Caco-2 (cell line): ENCODE measurements at regions of chr3 and their contacts with region 1.

Region 1: DNA sequence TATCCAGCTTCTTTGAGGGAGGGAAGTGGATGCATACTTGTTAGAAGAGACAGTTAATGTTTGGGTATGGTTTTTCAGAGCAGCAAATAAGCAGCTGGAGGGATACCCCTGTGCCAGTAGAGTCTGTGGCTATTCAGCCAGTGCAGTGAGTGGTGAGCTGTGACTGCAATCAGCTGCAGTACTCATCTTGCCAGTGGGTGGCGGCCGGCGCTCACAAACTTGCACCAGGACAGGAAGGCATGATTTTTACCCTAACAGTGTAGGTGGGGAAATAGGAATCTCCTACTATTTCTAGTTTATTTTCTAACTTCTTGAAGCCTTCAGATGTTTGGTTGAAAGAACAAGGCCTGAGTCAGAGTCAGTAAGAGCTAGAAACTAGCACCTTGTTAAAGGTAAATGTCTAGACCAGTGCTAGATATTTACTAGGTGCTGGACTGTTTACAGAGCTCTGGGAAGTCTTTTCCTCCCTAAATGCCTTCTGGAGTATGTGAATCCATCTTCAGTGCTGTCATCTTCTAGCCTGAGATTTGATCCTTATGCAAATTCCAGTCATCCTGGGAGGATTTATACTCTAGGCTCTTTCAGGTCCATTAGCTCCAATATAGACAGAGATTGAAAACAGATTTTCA is 23.6 kb downstream of the TIMP4 start:
- DNase-seq: peak; percentile 68 to 71
- H3K4me3 ChIP-seq: no peak overlapping the region
- H3K4me3 Mint-ChIP-seq: no peak overlapping the region
- H3K27ac Mint-ChIP-seq: no peak overlapping the region
- H3K4me1 ChIP-seq: no peaks in the 10 kb centered on the region
- H3K4me1 Mint-ChIP-seq: no peaks in the 10 kb centered on the region
- H3K27me3 ChIP-seq: no peaks in the 10 kb centered on the region; the same call in 1 of the 2 replicates
- H3K27me3 Mint-ChIP-seq: peaks cover 3% of the 10 kb centered on the region
- CTCF ChIP-seq: peak; percentile 71 to 89

Region 2: GRCh38 chr3:12107071-12107713 is 28.0 kb before region 1 on chr3:
- CTCF ChIA-PET with region 1: no interaction called
- POLR2A ChIA-PET with region 1: no interaction called
- intact Hi-C with region 1: no loop called
- DNase-seq: no peak
- H3K4me3 ChIP-seq: no peak overlapping the region
- H3K4me3 Mint-ChIP-seq: no peak overlapping the region
- H3K27ac Mint-ChIP-seq: no peak overlapping the region
- H3K4me1 ChIP-seq: no peaks in the 10 kb centered on the region
- H3K4me1 Mint-ChIP-seq: no peaks in the 10 kb centered on the region
- H3K27me3 ChIP-seq: no peaks in the 10 kb centered on the region
- H3K27me3 Mint-ChIP-seq: peaks cover 7% of the 10 kb centered on the region
- CTCF ChIP-seq: no peak

Region 3: DNA sequence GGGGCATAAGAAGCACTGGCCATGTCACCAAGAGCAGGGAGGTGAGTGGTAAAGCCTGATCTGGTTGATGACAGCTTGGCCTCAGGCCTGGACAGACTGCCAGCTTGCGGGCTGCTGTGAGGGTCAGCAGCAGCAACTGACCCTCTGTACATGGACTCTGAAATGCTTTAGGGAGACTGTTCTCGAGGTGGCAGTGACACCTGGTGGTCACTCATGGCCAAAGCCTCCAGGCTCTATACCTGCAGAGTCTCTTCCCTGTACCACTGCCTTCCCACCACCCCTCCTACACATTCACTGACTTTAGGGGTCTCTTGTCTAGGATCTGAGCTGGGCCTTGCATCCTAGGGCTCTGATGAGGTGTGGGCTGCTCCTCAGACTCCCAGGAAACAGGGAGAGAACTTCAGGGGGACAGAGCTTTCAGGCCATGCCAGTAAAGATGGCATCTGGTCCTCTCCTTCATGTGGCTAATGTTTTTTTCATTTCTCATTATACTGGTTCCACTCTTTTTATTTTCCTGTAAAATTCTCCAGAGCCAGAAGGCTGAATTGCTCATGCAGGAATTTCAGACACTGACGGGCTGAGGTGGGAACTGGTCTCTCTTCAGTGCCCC is 40.8 kb after region 1 on chr3:
- CTCF ChIA-PET with region 1: interaction called, 24 read pairs
- POLR2A ChIA-PET with region 1: no interaction called
- intact Hi-C with region 1: loop called (anchors 1 kb)
- DNase-seq: peak; percentile 56 to 69
- H3K4me3 ChIP-seq: no peak overlapping the region
- H3K4me3 Mint-ChIP-seq: no peak overlapping the region
- H3K27ac Mint-ChIP-seq: no peak overlapping the region
- H3K4me1 ChIP-seq: peaks cover 3% of the 10 kb centered on the region; the same call in 1 of the 2 replicates
- H3K4me1 Mint-ChIP-seq: no peaks in the 10 kb centered on the region
- H3K27me3 ChIP-seq: no peaks in the 10 kb centered on the region
- H3K27me3 Mint-ChIP-seq: no peaks in the 10 kb centered on the region
- CTCF ChIP-seq: peak; percentile 82 to 85

Region 4: DNA sequence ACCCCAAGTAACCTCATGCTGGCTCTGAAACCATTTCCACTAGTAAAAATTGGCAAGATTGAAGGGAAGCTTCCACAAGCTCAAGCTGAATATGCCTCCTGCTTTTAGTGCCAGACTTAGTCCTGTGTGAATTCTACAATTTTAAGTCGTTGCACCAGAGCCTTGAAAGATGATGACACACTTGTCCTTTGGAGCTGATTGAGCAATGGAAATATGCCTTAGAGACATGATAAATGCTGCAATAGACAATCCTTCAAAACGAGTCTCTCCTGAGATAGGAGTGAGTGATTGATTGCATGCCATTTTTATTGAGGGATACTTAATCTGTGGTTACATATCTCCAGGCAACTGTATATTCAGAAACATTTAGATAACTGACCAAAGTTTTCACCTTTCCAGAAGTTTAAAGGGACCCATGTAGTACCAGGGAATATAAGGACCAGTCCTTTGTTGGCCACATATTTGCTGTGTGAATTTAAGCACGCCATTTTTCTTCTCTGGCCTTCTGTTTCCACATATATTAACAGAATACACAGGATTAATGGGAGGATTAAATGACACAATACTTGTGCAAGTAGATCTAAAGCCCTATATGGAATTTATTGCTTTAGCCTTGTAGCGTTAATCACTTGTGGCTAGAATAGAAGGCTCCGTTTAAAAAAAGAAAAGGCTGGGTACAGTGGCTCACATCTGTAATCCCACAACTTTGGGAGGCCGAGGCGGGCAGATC is 218.8 kb after region 1 on chr3:
- CTCF ChIA-PET with region 1: no interaction called
- POLR2A ChIA-PET with region 1: no interaction called
- intact Hi-C with region 1: loop called (anchors 2 kb)
- DNase-seq: peak; percentile 36 to 70
- H3K4me3 ChIP-seq: no peak overlapping the region
- H3K4me3 Mint-ChIP-seq: no peak overlapping the region
- H3K27ac Mint-ChIP-seq: no peak overlapping the region
- H3K4me1 ChIP-seq: peaks cover 48% of the 10 kb centered on the region
- H3K4me1 Mint-ChIP-seq: peaks cover 20% of the 10 kb centered on the region
- H3K27me3 ChIP-seq: no peaks in the 10 kb centered on the region
- H3K27me3 Mint-ChIP-seq: no peaks in the 10 kb centered on the region
- CTCF ChIP-seq: no peak

Region 5: DNA sequence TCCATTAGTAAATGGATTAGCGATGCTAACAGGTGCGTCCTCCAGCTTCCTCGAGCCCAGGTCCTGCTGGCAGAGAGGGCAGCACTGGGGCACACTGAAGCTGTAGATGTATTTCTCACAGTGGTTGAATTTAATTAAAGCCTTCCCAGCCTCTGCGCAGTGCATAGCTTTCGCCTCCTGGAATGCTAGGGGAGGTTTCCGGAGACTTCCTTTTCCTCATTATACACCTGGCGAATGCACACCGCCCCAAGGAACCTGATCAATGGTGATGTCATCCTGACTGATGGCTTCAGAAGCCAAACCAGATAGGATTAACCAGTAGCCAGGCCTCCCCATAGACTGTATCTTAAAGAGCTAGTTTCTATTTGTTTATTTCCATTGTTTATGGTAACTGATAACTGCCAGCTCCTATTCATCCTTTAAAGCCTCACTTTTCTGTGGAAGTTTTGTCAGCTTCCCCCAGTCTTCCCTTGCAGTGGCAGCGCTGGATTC is 410.2 kb after region 1 on chr3 and contains the start of gene MKRN2OS:
- CTCF ChIA-PET with region 1: interaction called, 3 read pairs
- POLR2A ChIA-PET with region 1: no interaction called
- intact Hi-C with region 1: loop called (anchors 2 kb)
- DNase-seq: peak; percentile 72 to 77
- H3K4me3 ChIP-seq: peak within 1 kb of the TSS; percentile 45
- H3K4me3 Mint-ChIP-seq: peak within 1 kb of the TSS; percentile 74
- H3K27ac Mint-ChIP-seq: peak within 1 kb of the TSS; percentile 73
- H3K4me1 ChIP-seq: no peaks in the 10 kb centered on the region
- H3K4me1 Mint-ChIP-seq: no peaks in the 10 kb centered on the region
- H3K27me3 ChIP-seq: no peaks in the 10 kb centered on the region
- H3K27me3 Mint-ChIP-seq: no peaks in the 10 kb centered on the region
- CTCF ChIP-seq: no peak
- total RNA-seq, gene MKRN2OS: 1.6 and 1.7 TPM in 2 replicates